ENCODE measurements at regions of chr9 and their contacts with region 1.

Region 1: GRCh38 chr9:134407123-134407808 is 81.0 kb downstream of the RXRA start:
- DNase-seq: peak; percentile 92 to 93
- ATAC-seq: peak; percentile 73 to 85 (median 76)
- H3K4me3 ChIP-seq: peak overlapping the region in 8 of 10 donors; percentile 11 to 49 (median 32)
- H3K27ac ChIP-seq: peak overlapping the region in 9 of 10 donors; percentile 80 to 92 (median 86)
- H3K4me1 ChIP-seq: peaks cover 80 to 100% (median 99%) of the 10 kb centered on the region in 9 donors
- H3K27me3 ChIP-seq: no peaks in the 10 kb centered on the region
- CTCF ChIP-seq: no peak

Region 2: GRCh38 chr9:134067904-134068743 is 339.1 kb before region 1 on chr9 and contains the start of gene BRD3:
- intact Hi-C with region 1: loop called in 1 of 10 experiments (anchors 10 kb)
- DNase-seq: peak; percentile 83 to 86
- ATAC-seq: peak; percentile 84 to 94 (median 92)
- H3K4me3 ChIP-seq: peak within 1 kb of the TSS; percentile 70 to 98 (median 84)
- H3K27ac ChIP-seq: peak within 1 kb of the TSS; percentile 92 to 100 (median 98)
- H3K4me1 ChIP-seq: peaks cover 4 to 46% (median 37%) of the 10 kb centered on the region in 9 donors
- H3K27me3 ChIP-seq: peaks cover 0 to 14% (median 0%) of the 10 kb centered on the region in 7 donors
- CTCF ChIP-seq: peak in 1 of 9 donors; percentile 12
- total RNA-seq, gene BRD3: 23.2 to 34.4 (median 29.7) TPM

Region 3: GRCh38 chr9:134365791-134366688 is 41.2 kb before region 1 on chr9:
- intact Hi-C with region 1: loop called in 2 of 10 experiments (anchors 5 kb)
- DNase-seq: peak; percentile 89 to 92
- ATAC-seq: peak; percentile 82 to 90 (median 87)
- H3K4me3 ChIP-seq: peak overlapping the region in 7 of 10 donors; percentile 3 to 45 (median 24)
- H3K27ac ChIP-seq: peak overlapping the region; percentile 11 to 94 (median 73)
- H3K4me1 ChIP-seq: peaks cover 59 to 91% (median 80%) of the 10 kb centered on the region in 9 donors
- H3K27me3 ChIP-seq: no peaks in the 10 kb centered on the region
- CTCF ChIP-seq: peak in 4 of 9 donors; percentile 15 to 42 (median 36)

Region 4: DNA sequence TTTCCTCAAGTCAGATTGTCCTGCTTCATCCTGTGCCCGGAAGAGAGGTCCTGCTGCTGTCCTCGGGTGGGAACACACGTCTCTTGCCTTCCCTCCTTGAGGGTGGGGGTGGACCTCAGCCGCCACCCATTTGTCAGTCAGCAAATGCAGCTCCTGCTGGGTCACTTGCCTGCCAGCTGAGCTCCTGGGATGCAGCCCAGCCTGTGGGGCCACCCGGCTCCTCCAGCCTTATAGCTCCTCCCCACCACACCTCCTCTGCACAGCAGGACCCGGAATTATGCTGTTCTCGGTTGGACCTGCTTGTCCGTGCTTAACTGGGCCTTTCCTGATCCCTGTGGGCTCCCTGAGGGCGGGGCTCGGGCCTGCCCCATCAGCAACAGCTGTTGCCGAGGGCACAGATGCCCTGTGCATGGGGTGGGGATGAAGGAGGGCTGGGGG is 28.3 kb before region 1 on chr9:
- intact Hi-C with region 1: loop called in 3 of 10 experiments (anchors 2 to 5 kb)
- DNase-seq: peak; percentile 51 to 68
- ATAC-seq: peak; percentile 7 to 54 (median 31)
- H3K4me3 ChIP-seq: peak overlapping the region in 1 of 10 donors; percentile 8
- H3K27ac ChIP-seq: peak overlapping the region; percentile 0 to 98 (median 86)
- H3K4me1 ChIP-seq: peaks cover 77 to 100% (median 100%) of the 10 kb centered on the region in 9 donors
- H3K27me3 ChIP-seq: no peaks in the 10 kb centered on the region
- CTCF ChIP-seq: no peak

Region 5: DNA sequence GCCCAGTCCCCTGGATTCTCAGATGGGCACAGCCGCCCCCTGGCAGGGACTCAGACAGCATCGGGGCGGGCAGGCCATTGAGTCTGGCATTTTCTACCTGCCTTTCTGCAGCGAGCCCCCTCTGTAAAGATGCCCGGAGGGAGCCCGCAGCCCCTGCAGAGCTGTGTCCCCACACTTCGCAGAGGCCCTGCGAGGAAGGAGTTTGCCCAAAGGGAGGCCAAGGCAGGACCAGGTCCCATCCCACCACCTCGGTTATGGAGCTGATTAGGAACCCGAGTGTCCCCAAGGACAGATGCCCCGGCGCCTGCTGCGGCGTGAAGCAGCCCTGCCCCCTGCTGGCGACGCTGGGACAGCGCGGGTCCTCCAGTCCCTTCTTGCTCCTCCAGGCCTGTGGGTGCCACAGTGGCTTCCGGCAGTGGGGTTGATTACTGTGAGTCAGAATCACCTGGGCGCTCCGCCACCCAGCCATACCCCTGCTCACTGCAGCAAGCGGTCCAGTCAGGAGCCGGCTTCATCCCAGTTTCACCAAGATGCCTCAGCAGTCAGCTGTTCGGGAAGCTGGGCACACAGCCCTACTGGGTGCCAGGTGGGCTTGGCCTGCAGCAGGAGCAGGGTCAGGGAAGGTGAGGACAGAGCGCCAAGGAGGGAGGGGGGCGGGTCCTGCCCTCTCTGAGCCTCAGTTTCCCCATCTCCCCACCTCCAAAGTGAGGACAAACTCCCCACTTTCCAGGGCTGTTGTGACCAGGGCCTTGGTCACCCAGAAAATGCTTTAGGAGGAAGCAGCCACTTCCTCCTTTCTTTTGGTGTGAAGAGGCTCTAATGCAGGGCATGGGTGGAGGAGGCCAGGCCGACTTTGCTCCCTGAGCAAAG is 36.1 kb after region 1 on chr9:
- intact Hi-C with region 1: loop called in 2 of 10 experiments (anchors 5 kb)
- DNase-seq: peak; percentile 78 to 86
- ATAC-seq: peak; percentile 79 to 94 (median 86)
- H3K4me3 ChIP-seq: peak overlapping the region in 1 of 10 donors; percentile 5
- H3K27ac ChIP-seq: peak overlapping the region in 3 of 10 donors; percentile 12 to 76 (median 43)
- H3K4me1 ChIP-seq: peaks cover 25 to 50% (median 40%) of the 10 kb centered on the region in 9 donors
- H3K27me3 ChIP-seq: peaks cover 0 to 9% (median 0%) of the 10 kb centered on the region in 7 donors
- CTCF ChIP-seq: peak; percentile 97 to 100 (median 99)

Region 6: DNA sequence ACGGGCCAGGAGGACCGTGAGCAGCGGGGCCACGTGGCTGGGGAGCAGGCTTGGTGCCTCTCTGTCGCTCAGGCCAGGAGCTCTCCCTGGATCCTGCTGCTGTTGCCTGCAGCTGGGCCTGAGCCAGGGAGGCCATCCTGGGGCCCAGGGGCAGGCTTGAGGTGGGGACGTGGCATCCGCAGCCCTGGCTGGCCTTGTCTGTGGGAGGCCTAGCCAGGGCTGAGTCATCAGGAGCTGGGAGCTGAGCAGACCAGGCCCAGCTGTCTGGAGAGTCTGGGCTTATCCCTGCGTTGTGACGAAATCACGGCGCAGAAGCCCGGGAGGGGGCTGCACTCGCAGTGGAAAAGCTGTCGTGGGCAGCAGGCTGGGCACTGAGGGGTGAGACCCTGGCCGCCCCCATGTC is 95.5 kb after region 1 on chr9:
- intact Hi-C with region 1: no loop called
- DNase-seq: peak; percentile 58 to 72
- ATAC-seq: peak; percentile 94 to 98 (median 96)
- H3K4me3 ChIP-seq: no peak overlapping the region
- H3K27ac ChIP-seq: peak overlapping the region in 1 of 10 donors; percentile 73
- H3K4me1 ChIP-seq: peaks cover 0 to 15% (median 8%) of the 10 kb centered on the region in 9 donors
- H3K27me3 ChIP-seq: peaks cover 0 to 49% (median 31%) of the 10 kb centered on the region in 7 donors
- CTCF ChIP-seq: no peak